Transverse colon (tissue), 4 donors: ENCODE measurements at regions of chr18 and their contacts with region 1.

Region 1: GRCh38 chr18:65906621-65907034 is 155.8 kb downstream of the CDH7 start:
- DNase-seq: peak; percentile 67
- H3K4me3 ChIP-seq: no peak overlapping the region
- H3K27ac ChIP-seq: peak overlapping the region in 3 of 4 donors; percentile 45 to 57 (median 50)
- H3K4me1 ChIP-seq: peaks cover 0 to 28% (median 12%) of the 10 kb centered on the region in 4 donors
- H3K27me3 ChIP-seq: no peaks in the 10 kb centered on the region
- CTCF ChIP-seq: no peak
- EP300 ChIP-seq: no peak
- POLR2A ChIP-seq: no peak

Region 2: DNA sequence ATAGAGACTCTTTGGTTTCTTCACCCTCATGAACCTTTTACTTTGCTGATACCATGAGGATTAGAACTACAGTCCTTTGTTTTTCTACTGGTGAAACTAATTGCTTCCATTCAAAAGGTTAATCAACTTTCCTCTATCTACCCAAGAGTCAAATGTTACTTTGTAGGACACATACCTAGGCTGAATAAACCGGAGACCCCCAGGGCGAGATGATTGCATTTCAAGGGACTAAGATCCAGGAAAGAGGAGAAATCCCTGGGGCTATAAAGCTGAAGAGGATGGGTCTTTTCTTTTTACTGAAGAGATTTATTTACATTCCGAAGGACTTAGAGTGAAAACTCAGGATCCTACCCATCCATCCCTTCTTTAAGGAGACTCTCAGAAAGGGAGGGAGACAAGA is 365.3 kb after region 1 on chr18:
- in situ Hi-C with region 1: no loop called
- intact Hi-C with region 1: loop called (anchors 5 kb)
- DNase-seq: no peak
- H3K4me3 ChIP-seq: no peak overlapping the region
- H3K27ac ChIP-seq: no peak overlapping the region
- H3K4me1 ChIP-seq: no peaks in the 10 kb centered on the region
- H3K27me3 ChIP-seq: no peaks in the 10 kb centered on the region
- CTCF ChIP-seq: no peak
- EP300 ChIP-seq: no peak
- POLR2A ChIP-seq: no peak